Naive thymus-derived CD4-positive, alpha-beta T cell (primary cell): ENCODE measurements at regions of chr3 and their contacts with region 1.

Region 1: GRCh38 chr3:134212906-134213665 is 37.6 kb downstream of the RYK start:
- DNase-seq: peak; percentile 54 to 88 (median 71)
- ATAC-seq: peak; percentile 93
- H3K4me3 ChIP-seq: no peak overlapping the region
- H3K4me3 Mint-ChIP-seq: peak overlapping the region in 1 of 10 donors; percentile 18
- H3K27ac ChIP-seq: no peak overlapping the region
- H3K27ac Mint-ChIP-seq: peak overlapping the region in 5 of 9 donors; percentile 12 to 60 (median 33)
- H3K4me1 ChIP-seq: no peaks in the 10 kb centered on the region
- H3K4me1 Mint-ChIP-seq: peaks cover 7 to 43% (median 30%) of the 10 kb centered on the region in 7 donors
- H3K27me3 ChIP-seq: no peaks in the 10 kb centered on the region
- H3K27me3 Mint-ChIP-seq: no peaks in the 10 kb centered on the region

Region 2: DNA sequence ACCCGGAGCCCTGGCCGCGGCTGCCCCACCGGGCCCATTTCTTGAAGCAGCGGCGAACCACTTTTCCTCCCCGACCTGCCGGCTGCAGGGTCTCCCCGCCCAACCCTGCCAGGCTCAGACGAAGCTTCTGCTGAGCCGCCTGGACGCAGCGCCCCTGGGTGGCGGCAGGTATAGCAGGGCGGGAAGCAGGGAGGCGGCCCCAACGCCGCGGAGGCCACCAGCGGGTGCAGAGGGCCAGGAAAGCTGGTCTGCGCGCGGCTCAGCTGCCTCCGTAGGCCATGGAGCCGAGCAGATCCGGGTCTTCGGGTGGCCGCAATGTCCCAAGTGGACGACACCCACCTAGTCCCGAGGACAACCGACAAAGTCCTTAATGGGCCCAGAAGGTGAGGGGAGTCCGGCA is 429.3 kb before region 1 on chr3:
- CTCF ChIA-PET with region 1: no interaction called
- POLR2A ChIA-PET with region 1: no interaction called
- intact Hi-C with region 1: no loop called
- DNase-seq: no peak
- ATAC-seq: no peak
- H3K4me3 ChIP-seq: no peak overlapping the region
- H3K4me3 Mint-ChIP-seq: no peak overlapping the region
- H3K27ac ChIP-seq: no peak overlapping the region
- H3K27ac Mint-ChIP-seq: no peak overlapping the region
- H3K4me1 ChIP-seq: no peaks in the 10 kb centered on the region
- H3K4me1 Mint-ChIP-seq: no peaks in the 10 kb centered on the region
- H3K27me3 ChIP-seq: no peaks in the 10 kb centered on the region
- H3K27me3 Mint-ChIP-seq: peaks cover 23 to 32% (median 26%) of the 10 kb centered on the region in 5 donors

Region 3: GRCh38 chr3:133815386-133815785 is 397.7 kb before region 1 on chr3:
- CTCF ChIA-PET with region 1: no interaction called
- POLR2A ChIA-PET with region 1: no interaction called
- intact Hi-C with region 1: loop called in 1 of 2 experiments (anchors 5 kb)
- DNase-seq: no peak
- ATAC-seq: no peak
- H3K4me3 ChIP-seq: no peak overlapping the region
- H3K4me3 Mint-ChIP-seq: no peak overlapping the region
- H3K27ac ChIP-seq: no peak overlapping the region
- H3K27ac Mint-ChIP-seq: peak overlapping the region in 2 of 9 donors; percentile 4 to 77
- H3K4me1 ChIP-seq: no peaks in the 10 kb centered on the region
- H3K4me1 Mint-ChIP-seq: peaks cover 8 to 38% (median 19%) of the 10 kb centered on the region in 7 donors
- H3K27me3 ChIP-seq: no peaks in the 10 kb centered on the region
- H3K27me3 Mint-ChIP-seq: no peaks in the 10 kb centered on the region

Region 4: DNA sequence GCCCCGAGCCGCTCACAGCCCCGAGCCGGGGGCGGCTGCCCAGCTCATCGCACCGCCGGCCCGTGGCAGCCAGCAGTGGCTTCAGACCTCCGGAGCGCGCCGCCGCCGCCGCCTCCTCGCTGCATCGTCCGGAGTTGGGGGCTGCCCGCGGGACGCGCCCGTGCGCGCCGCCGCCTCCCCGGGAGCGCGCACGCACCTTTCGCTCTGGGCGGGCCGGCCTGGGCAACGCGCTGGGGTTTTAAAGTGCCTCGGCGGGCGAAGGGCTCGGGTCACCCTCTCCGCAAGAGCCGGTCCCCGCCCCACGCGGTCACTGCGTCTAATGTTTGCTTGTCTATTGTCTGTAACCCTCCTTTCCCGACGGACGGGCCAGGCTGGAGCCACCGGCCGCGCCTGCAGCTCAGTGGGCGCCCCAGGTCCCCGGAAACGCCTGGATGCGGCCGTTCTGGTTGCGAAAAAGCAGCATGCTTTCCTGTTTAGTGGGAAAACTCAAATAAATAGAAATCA is 37.7 kb after region 1 on chr3 and contains the start of gene RYK:
- CTCF ChIA-PET with region 1: no interaction called
- POLR2A ChIA-PET with region 1: no interaction called
- intact Hi-C with region 1: loop called in 1 of 2 experiments (anchors 1 kb)
- DNase-seq: peak; percentile 65 to 85 (median 79)
- ATAC-seq: peak; percentile 93
- H3K4me3 ChIP-seq: peak within 1 kb of the TSS; percentile 78
- H3K4me3 Mint-ChIP-seq: peak within 1 kb of the TSS; percentile 90 to 99 (median 96)
- H3K27ac ChIP-seq: peak within 1 kb of the TSS; percentile 86
- H3K27ac Mint-ChIP-seq: peak within 1 kb of the TSS; percentile 72 to 99 (median 95)
- H3K4me1 ChIP-seq: peaks cover 12 to 14% of the 10 kb centered on the region in 2 donors
- H3K4me1 Mint-ChIP-seq: peaks cover 25 to 62% (median 57%) of the 10 kb centered on the region in 7 donors
- H3K27me3 ChIP-seq: no peaks in the 10 kb centered on the region
- H3K27me3 Mint-ChIP-seq: peaks cover 0 to 54% (median 0%) of the 10 kb centered on the region in 5 donors
- total RNA-seq, gene RYK: 10.7 to 53.5 (median 50.5) TPM

Region 5: DNA sequence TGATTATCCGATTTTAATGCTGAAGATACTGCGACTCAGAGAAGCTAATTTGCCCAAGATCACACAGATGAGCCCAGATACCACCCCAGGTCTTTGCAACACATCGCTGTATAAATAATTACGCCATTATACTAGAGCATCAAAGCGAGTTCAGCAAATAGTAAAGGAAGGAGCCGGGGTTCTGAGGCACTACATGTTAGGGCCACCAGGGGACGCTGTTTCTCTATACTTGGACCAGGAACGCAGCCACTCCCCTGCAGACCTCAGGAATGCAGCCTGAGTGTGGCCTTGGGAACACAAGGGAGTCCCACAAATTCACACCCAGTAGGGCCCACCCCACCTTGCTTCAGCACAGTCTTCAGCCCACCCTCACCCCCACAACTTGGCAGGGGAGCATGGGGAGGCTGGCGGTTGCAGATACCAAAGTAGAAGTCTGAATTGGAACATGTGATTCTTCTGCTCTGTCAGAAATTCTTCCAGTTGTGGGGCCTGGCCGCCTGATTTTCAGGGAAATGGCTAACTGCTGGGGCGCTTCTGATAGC is 95.3 kb after region 1 on chr3:
- CTCF ChIA-PET with region 1: interaction called, 7 read pairs
- POLR2A ChIA-PET with region 1: no interaction called
- intact Hi-C with region 1: loop called in 1 of 2 experiments (anchors 1 kb)
- DNase-seq: peak; percentile 52 to 76 (median 69)
- ATAC-seq: peak; percentile 94
- H3K4me3 ChIP-seq: no peak overlapping the region
- H3K4me3 Mint-ChIP-seq: peak overlapping the region in 6 of 10 donors; percentile 27 to 80 (median 32)
- H3K27ac ChIP-seq: no peak overlapping the region
- H3K27ac Mint-ChIP-seq: peak overlapping the region in 2 of 9 donors; percentile 7 to 59
- H3K4me1 ChIP-seq: no peaks in the 10 kb centered on the region
- H3K4me1 Mint-ChIP-seq: peaks cover 0 to 10% (median 5%) of the 10 kb centered on the region in 7 donors
- H3K27me3 ChIP-seq: no peaks in the 10 kb centered on the region
- H3K27me3 Mint-ChIP-seq: peaks cover 28 to 73% (median 31%) of the 10 kb centered on the region in 5 donors

Region 6: DNA sequence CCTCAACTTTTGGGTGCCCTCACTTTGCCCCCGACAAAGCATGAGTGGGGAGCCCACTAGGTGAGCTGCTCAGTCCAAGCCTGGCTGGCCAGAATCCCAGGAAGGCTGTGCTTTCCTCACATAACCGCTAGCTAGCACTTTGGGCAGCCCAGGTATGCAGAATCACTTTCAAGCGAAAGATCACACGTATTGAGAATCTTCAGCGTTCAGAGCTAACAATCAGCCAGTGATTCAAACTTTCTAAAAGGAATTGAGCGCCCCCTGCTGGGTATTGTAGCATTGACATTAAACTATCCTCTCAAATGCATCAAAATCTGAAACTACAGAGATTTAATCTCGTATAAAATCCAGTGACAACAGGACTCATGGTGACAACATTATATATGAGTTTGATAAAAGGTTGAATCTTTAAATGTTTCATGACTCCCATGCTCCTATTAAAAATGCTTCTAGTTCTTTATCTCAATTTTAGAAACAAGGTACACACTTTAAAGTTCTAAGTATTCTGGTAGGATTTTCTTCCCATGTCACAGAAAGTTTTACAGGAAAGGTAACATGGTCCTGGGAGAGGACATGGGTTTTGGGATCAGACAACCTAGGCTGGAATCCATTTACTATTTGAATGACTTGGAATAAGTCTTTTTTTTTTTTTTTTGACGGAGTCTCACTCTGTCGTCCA is 260.9 kb after region 1 on chr3:
- CTCF ChIA-PET with region 1: interaction called, 18 read pairs
- POLR2A ChIA-PET with region 1: no interaction called
- intact Hi-C with region 1: loop called (anchors 1 kb)
- DNase-seq: peak; percentile 50 to 81 (median 74)
- ATAC-seq: peak; percentile 89
- H3K4me3 ChIP-seq: no peak overlapping the region
- H3K4me3 Mint-ChIP-seq: no peak overlapping the region
- H3K27ac ChIP-seq: no peak overlapping the region
- H3K27ac Mint-ChIP-seq: peak overlapping the region in 1 of 9 donors; percentile 32
- H3K4me1 ChIP-seq: no peaks in the 10 kb centered on the region
- H3K4me1 Mint-ChIP-seq: peaks cover 0 to 9% (median 0%) of the 10 kb centered on the region in 7 donors
- H3K27me3 ChIP-seq: no peaks in the 10 kb centered on the region
- H3K27me3 Mint-ChIP-seq: no peaks in the 10 kb centered on the region